GM13976 (cell line): ENCODE measurements at regions of chr11 and their contacts with region 1.

Region 1: DNA sequence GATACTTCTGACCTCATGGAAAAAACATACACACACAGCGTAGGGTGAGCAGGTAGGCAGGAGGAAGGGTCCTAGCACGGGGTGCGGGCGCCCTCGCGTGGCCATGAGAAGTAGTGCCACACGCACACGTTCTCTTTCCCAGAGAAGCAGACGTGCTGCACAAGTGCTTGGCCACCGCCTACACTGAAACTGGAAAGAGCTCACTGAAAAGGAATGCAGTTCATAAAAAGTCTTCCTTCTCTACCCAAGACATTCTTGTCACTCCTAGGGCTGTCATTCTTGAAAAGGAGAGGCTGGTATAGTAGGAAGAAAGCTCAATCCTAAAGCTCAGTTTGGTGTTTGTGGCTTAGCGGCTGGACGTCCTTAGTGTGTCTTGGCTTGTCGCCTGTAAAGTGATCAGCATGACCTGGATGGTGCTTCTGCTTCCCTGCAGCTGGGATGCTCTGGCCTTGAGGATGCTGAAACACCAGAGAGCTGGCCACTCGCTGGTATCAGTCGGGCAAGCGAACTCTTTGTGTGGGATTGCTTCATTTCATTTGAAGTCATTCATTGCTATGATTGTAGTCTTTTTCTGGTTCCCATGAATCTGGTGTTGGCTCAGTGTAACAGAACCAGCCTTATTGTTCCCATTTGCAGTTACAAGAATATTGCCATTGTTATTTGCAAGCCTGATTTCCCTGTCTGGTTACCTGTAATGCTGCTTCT is 303.8 kb downstream of the NTM start:
- DNase-seq: peak; percentile 79
- CTCF ChIP-seq: peak; percentile 97

Region 2: GRCh38 chr11:131064373-131064991 is 609.7 kb before region 1 on chr11:
- in situ Hi-C with region 1: loop called (anchors 25 kb)
- DNase-seq: peak; percentile 69
- CTCF ChIP-seq: peak; percentile 88

Region 3: GRCh38 chr11:131579932-131580387 is 94.2 kb before region 1 on chr11:
- in situ Hi-C with region 1: loop called (anchors 10 kb)
- DNase-seq: peak; percentile 48
- CTCF ChIP-seq: peak; percentile 57

Region 4: DNA sequence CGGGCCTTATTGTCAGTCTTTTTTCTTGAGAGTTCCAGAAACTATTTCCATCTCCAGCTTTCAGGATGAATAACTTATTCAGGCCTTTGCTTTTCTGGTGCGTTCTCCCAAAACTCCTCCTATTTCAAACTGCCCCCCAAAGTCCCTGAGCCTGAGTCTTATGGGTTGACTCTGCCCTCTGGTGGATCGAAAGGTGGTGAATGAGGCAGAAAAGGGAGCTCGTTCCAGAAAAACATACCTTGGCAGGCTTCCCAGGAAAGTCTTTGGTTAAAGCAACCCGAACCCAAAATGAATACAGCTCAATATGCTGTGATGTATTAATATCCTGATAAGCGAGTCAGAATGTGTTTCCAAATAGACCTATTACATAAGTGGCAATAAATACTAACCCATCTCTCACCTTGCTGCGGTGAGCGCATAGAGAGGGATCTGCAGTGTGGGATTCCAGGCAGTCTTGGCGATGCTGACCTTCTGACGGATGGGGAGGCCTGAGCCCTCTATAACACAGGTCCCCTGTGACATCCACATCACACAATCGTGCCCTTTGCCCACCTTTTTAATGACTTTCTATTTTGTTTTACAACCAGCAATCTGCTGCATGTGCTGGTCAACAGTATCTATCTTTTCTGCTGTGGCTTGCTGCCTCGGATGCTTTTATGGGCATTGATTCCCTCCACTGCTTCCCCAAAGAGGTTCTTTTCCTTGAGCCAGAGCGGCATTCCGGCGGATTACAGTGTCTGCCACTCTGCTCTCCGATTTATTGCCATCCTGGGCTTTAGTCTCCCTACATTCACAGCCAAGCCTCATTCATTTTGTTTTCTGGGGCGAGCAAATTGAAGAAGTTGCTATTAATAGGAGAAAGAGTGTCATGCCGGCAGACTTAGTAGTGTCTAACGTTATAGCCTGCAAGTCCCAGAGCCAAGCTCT is 453.0 kb after region 1 on chr11:
- in situ Hi-C with region 1: no loop called
- DNase-seq: peak; percentile 47
- CTCF ChIP-seq: peak; percentile 8